ENCODE measurements at regions of chr9 and their contacts with region 1.

Region 1: GRCh38 chr9:99819856-99820684 is 1.6 kb upstream of the NR4A3 start:
- DNase-seq: peak; percentile 84
- ATAC-seq: peak; percentile 35
- H3K4me3 ChIP-seq: peak overlapping the region; percentile 89
- H3K27ac ChIP-seq: peak overlapping the region; percentile 75
- H3K4me1 ChIP-seq: peaks cover 12% of the 10 kb centered on the region; the same call in 1 of the 2 replicates
- H3K27me3 ChIP-seq: no peaks in the 10 kb centered on the region
- CTCF ChIP-seq: 0 out of 2 replicates have a peak, but pooled peaks have one; percentile 17

Region 2: GRCh38 chr9:99221621-99222415 is 598.3 kb before region 1 on chr9 and contains the starts of genes ALG2 and SEC61B:
- CTCF ChIA-PET with region 1: no interaction called
- POLR2A ChIA-PET with region 1: no interaction called
- intact Hi-C with region 1: loop called (anchors 5 kb)
- DNase-seq: peak; percentile 79
- ATAC-seq: peak; percentile 95
- H3K4me3 ChIP-seq: peak within 1 kb of the TSS; percentile 94
- H3K27ac ChIP-seq: peak within 1 kb of the TSS; percentile 82
- H3K4me1 ChIP-seq: peaks cover 11% of the 10 kb centered on the region; the same call in 1 of the 2 replicates
- H3K27me3 ChIP-seq: no peaks in the 10 kb centered on the region
- CTCF ChIP-seq: no peak
- total RNA-seq, gene ALG2: 32.9 and 33.2 TPM in 2 replicates
- total RNA-seq, gene SEC61B: 91.3 and 107 TPM in 2 replicates

Region 3: GRCh38 chr9:99590840-99591239 is 229.2 kb before region 1 on chr9:
- CTCF ChIA-PET with region 1: no interaction called
- POLR2A ChIA-PET with region 1: no interaction called
- intact Hi-C with region 1: no loop called
- DNase-seq: no peak
- ATAC-seq: no peak
- H3K4me3 ChIP-seq: no peak overlapping the region
- H3K27ac ChIP-seq: no peak overlapping the region
- H3K4me1 ChIP-seq: no peaks in the 10 kb centered on the region
- H3K27me3 ChIP-seq: no peaks in the 10 kb centered on the region; the same call in 1 of the 2 replicates
- CTCF ChIP-seq: no peak

Region 4: DNA sequence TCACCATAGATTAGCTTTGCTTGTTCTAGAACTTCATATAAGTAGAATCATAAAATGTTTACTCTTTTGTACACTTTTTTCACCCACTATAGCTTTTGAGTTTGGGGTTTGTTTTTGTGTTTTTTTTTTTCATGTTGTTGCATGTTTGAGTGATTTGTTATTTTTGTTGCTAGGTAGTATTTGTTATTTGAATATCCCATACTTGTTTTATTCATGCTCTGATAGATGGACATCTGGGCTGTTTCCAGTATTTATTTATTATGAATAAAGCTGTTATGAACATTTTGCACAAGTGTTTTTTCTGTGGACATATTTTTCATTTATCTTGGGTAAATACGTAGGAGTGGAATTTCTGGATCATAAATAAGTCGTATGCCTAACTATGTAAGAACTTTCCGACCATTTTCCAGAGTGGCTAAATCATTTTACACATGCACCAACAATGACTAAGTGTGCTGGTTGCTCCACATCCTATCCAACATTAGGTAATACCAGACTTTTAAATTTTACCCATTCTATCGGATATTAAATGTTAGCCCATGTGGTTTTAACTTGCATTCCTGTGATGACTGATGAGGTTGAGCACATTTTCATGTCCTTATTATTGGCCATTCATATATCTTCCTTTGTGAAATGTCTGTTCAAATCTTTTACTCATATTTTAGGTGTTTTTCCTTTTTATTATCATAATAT is 67.5 kb before region 1 on chr9:
- CTCF ChIA-PET with region 1: no interaction called
- POLR2A ChIA-PET with region 1: no interaction called
- intact Hi-C with region 1: no loop called
- DNase-seq: peak; percentile 32
- ATAC-seq: no peak
- H3K4me3 ChIP-seq: no peak overlapping the region
- H3K27ac ChIP-seq: no peak overlapping the region
- H3K4me1 ChIP-seq: no peaks in the 10 kb centered on the region
- H3K27me3 ChIP-seq: 0 out of 2 replicates have a peak, but pooled peaks cover 3% of the 10 kb centered on the region
- CTCF ChIP-seq: no peak

Region 5: DNA sequence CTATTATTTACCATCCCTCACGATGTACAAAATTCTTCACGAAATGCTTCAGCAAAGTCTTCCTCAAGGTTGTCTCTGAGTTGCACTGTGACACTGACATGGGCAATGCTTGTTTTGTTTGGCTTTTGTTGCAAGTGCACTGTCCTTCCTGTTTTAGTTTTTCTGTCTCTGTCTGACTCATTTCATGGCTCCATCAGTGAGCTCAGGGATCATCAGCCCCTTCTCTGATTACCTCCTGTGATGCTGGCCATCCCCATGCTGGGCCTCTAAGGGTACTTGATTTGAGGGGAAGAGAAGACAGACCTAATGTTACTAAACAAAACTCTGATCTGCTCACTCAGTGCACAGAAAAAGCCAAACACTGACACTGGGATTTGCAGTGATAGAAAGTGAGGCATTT is 48.8 kb after region 1 on chr9:
- CTCF ChIA-PET with region 1: no interaction called
- POLR2A ChIA-PET with region 1: no interaction called
- intact Hi-C with region 1: loop called (anchors 5 kb)
- DNase-seq: no peak
- ATAC-seq: no peak
- H3K4me3 ChIP-seq: no peak overlapping the region
- H3K27ac ChIP-seq: no peak overlapping the region
- H3K4me1 ChIP-seq: peaks cover 24% of the 10 kb centered on the region
- H3K27me3 ChIP-seq: no peaks in the 10 kb centered on the region
- CTCF ChIP-seq: no peak

Region 6: GRCh38 chr9:99906403-99907207 is 86.5 kb after region 1 on chr9 and contains the start of gene STX17:
- CTCF ChIA-PET with region 1: no interaction called
- POLR2A ChIA-PET with region 1: no interaction called
- intact Hi-C with region 1: loop called (anchors 1 kb)
- DNase-seq: peak; percentile 60
- ATAC-seq: peak; percentile 82
- H3K4me3 ChIP-seq: peak within 1 kb of the TSS; percentile 85
- H3K27ac ChIP-seq: peak within 1 kb of the TSS; percentile 69
- H3K4me1 ChIP-seq: peaks cover 9% of the 10 kb centered on the region; the same call in 1 of the 2 replicates
- H3K27me3 ChIP-seq: no peaks in the 10 kb centered on the region
- CTCF ChIP-seq: no peak
- total RNA-seq, gene STX17: 12.8 TPM in 2 replicates

Region 7: DNA sequence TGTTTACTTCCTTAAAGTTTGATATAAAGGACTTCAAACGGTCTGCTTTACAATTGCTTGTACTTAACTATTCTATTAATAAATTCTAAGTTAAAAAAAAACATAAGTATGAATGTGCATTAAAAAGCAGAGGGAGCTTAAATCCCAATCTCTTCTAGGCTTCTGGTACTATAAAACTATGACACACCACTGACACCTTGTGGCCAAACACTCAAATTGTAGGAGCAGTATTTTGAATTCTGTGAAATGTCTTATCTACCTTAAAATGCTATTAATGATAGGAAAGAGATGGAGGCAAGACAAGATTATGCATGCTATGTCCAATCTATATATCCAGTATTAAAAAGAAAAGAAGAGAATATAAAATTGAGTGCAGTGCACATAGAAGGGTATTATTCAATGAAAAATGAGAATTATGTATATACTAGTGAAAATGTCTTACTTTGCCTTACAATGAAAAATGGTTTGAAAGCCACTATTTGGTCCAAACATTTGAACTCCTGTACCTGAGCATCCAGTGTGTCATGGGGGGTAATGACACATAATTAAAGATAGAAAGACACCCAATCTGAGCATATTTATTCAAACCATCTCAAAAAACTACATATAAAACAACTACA is 191.1 kb after region 1 on chr9:
- CTCF ChIA-PET with region 1: no interaction called
- POLR2A ChIA-PET with region 1: no interaction called
- intact Hi-C with region 1: loop called (anchors 5 kb)
- DNase-seq: peak; percentile 66
- ATAC-seq: peak; percentile 38
- H3K4me3 ChIP-seq: no peak overlapping the region
- H3K27ac ChIP-seq: no peak overlapping the region
- H3K4me1 ChIP-seq: no peaks in the 10 kb centered on the region
- H3K27me3 ChIP-seq: no peaks in the 10 kb centered on the region
- CTCF ChIP-seq: peak; percentile 67

Region 8: GRCh38 chr9:100216178-100216787 is 396.2 kb after region 1 on chr9:
- CTCF ChIA-PET with region 1: no interaction called
- POLR2A ChIA-PET with region 1: no interaction called
- intact Hi-C with region 1: loop called (anchors 10 kb)
- DNase-seq: peak; percentile 67
- ATAC-seq: peak; percentile 67
- H3K4me3 ChIP-seq: no peak overlapping the region
- H3K27ac ChIP-seq: no peak overlapping the region
- H3K4me1 ChIP-seq: no peaks in the 10 kb centered on the region
- H3K27me3 ChIP-seq: no peaks in the 10 kb centered on the region
- CTCF ChIP-seq: peak; percentile 78

Measured in PC-3 (cell line).